Heart left ventricle (tissue), 16 donors: ENCODE measurements at regions of chr15 and their contacts with region 1.

Region 1: DNA sequence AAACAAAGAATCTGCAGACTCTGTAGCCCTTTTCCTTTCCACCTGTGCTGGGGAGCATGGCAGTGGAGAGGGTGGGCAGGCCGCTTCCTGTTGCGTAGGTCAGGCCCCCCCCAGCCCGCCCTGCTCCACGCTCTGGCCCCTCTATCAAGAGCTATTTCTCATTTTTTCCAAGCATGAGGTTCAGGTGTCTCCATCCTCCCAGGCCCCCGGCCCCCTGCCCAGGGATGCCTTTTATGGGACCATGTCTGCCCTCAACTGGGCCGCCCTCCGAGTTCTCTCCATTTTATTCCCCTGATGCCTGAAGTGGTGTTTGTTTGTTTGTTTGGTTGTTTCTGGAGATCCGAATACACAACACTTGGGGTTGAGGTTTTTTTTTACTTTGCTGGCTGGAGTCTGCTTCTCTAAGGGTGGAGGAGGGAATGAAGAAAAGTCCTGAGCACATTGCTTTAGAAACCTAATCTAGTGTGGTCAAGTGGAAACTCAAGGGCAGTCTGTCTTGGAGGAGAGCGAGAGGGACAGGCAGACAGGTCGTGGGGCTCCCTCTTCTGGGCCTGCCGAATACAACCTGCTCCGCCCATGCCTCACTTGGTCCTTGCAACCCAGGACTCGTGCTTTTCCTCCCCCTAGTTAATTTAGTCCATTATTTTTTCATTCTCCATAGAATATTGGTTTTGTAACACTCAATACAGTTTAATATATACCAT is 176.5 kb upstream of the LYSMD4 start:
- DNase-seq: peak in 1 of 5 donors; percentile 43
- ATAC-seq: peak in 3 of 4 donors; percentile 78 to 89 (median 86)
- H3K4me3 ChIP-seq: no peak overlapping the region
- H3K27ac ChIP-seq: no peak overlapping the region
- H3K4me1 ChIP-seq: no peaks in the 10 kb centered on the region
- H3K27me3 ChIP-seq: no peaks in the 10 kb centered on the region
- CTCF ChIP-seq: peak in 11 of 12 donors; percentile 8 to 53 (median 39)
- POLR2A ChIP-seq: no peak

Region 2: GRCh38 chr15:99818872-99819271 is 90.9 kb before region 1 on chr15:
- intact Hi-C with region 1: loop called in 1 of 10 experiments (anchors 10 kb)
- DNase-seq: no peak
- ATAC-seq: peak; percentile 43 to 73 (median 58)
- H3K4me3 ChIP-seq: no peak overlapping the region
- H3K27ac ChIP-seq: no peak overlapping the region
- H3K4me1 ChIP-seq: peaks cover 0 to 15% (median 0%) of the 10 kb centered on the region in 12 donors
- H3K27me3 ChIP-seq: no peaks in the 10 kb centered on the region
- CTCF ChIP-seq: no peak
- POLR2A ChIP-seq: no peak

Region 3: GRCh38 chr15:99963096-99963825 is 53.5 kb after region 1 on chr15:
- intact Hi-C with region 1: no loop called
- DNase-seq: peak in 2 of 5 donors; percentile 1 to 10
- ATAC-seq: no peak
- H3K4me3 ChIP-seq: no peak overlapping the region
- H3K27ac ChIP-seq: no peak overlapping the region
- H3K4me1 ChIP-seq: no peaks in the 10 kb centered on the region
- H3K27me3 ChIP-seq: peaks cover 0 to 8% (median 0%) of the 10 kb centered on the region in 9 donors
- CTCF ChIP-seq: no peak
- POLR2A ChIP-seq: no peak